ENCODE measurements at regions of chr4 and their contacts with region 1.

Region 1: DNA sequence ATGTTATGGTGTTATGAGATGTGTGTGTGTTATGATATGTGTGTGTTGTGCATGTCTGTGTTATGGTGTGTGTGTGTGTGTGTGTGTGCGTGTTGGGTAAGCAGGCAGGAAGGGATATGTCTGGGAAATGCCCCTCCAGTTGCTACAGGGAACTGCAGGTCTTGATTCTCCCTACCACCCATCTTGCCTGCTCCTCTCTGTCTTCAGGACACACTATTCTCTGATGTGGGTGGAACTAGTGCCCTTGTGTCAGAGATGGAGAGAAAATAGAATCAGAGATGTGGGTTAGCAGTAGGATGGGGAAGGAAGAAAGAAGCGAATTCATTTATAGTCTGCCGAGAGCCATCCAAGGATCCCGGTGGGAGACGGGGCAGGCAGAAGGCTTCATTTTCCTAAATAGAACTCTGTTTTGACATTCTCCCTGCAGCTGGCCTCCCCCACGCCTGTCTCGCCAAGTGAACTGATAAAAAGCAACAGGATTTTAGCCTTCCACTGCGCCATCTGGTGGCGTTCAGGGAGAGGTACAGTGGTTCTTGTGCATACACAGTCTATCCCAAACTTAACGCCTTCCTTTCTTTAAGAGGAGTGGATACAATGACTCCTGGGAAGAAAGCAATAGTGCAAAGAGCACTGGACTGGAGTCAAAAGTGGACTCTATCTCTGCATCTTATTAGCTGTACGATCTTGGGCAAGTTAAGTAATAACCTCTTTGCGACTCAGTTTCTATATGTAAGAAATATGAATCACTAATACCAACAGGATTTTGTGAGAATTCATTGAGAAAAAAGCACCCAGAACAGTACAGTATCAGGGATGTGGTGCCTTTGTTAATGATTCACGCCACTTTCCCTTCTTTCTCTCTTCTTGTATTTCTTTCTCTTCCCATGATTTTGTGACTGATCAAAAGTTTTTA is 14.1 kb upstream of the MGST2 start:
- DNase-seq: peak; percentile 85
- H3K4me3 ChIP-seq: no peak overlapping the region
- H3K27ac ChIP-seq: no peak overlapping the region
- H3K4me1 ChIP-seq: no peaks in the 10 kb centered on the region
- H3K27me3 ChIP-seq: no peaks in the 10 kb centered on the region
- CTCF ChIP-seq: peak; percentile 92

Region 2: GRCh38 chr4:139030614-139031235 is 620.8 kb before region 1 on chr4:
- CTCF ChIA-PET with region 1: interaction called, 6 read pairs
- POLR2A ChIA-PET with region 1: no interaction called
- intact Hi-C with region 1: loop called (anchors 10 kb)
- DNase-seq: peak; percentile 86
- H3K4me3 ChIP-seq: no peak overlapping the region
- H3K27ac ChIP-seq: no peak overlapping the region
- H3K4me1 ChIP-seq: peaks cover 3% of the 10 kb centered on the region
- H3K27me3 ChIP-seq: no peaks in the 10 kb centered on the region
- CTCF ChIP-seq: peak; percentile 91

Region 3: GRCh38 chr4:139108567-139109128 is 542.9 kb before region 1 on chr4:
- CTCF ChIA-PET with region 1: no interaction called
- POLR2A ChIA-PET with region 1: no interaction called
- intact Hi-C with region 1: loop called (anchors 10 kb)
- DNase-seq: no peak
- H3K4me3 ChIP-seq: no peak overlapping the region
- H3K27ac ChIP-seq: no peak overlapping the region
- H3K4me1 ChIP-seq: no peaks in the 10 kb centered on the region
- H3K27me3 ChIP-seq: no peaks in the 10 kb centered on the region
- CTCF ChIP-seq: no peak

Region 4: GRCh38 chr4:139416073-139416673 is 235.4 kb before region 1 on chr4:
- CTCF ChIA-PET with region 1: no interaction called
- POLR2A ChIA-PET with region 1: no interaction called
- intact Hi-C with region 1: loop called (anchors 10 kb)
- DNase-seq: peak; percentile 60
- H3K4me3 ChIP-seq: no peak overlapping the region
- H3K27ac ChIP-seq: no peak overlapping the region
- H3K4me1 ChIP-seq: peaks cover 13% of the 10 kb centered on the region
- H3K27me3 ChIP-seq: no peaks in the 10 kb centered on the region
- CTCF ChIP-seq: peak; percentile 75

Region 5: DNA sequence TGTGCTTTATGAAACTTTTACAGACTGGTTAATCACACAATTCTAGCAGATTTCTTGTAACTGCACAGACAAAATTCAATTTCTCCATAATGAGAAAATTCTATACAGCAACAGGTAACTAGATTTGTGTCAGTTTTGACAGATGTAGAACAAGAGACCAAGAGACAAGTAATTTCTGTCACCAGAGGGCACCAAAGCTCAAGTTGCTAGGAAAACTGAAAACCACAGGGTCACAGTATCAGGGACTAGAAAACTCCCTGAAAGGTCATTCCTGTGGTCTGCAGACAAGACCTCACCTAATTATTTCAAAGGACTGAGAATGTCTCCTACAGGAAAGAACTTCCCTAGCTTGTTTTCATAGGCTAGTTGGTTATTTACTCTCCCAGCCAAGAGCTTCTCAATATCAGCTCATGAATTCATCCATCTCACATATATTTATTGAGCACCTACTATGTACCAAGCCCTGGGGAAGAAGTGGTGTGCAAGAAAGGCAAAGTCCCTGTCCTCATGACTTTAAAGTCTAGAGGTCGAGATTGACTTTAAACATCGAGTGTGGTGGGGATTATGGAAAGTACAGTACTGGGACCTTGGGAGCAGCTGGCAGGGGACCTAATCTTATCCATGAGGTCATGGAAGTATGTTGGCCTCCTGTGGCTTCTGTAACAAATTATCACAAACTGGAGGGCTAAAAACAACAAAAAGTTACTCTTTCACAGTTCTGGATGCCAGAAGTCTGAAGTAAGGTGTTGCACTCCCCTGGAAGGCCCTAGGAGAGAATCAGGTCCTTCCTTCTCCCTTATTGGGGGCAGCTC is 47.8 kb before region 1 on chr4:
- CTCF ChIA-PET with region 1: interaction called, 17 read pairs
- POLR2A ChIA-PET with region 1: no interaction called
- intact Hi-C with region 1: loop called (anchors 1 kb)
- DNase-seq: peak; percentile 80
- H3K4me3 ChIP-seq: no peak overlapping the region
- H3K27ac ChIP-seq: peak overlapping the region; percentile 63
- H3K4me1 ChIP-seq: peaks cover 56% of the 10 kb centered on the region
- H3K27me3 ChIP-seq: no peaks in the 10 kb centered on the region
- CTCF ChIP-seq: peak; percentile 84

Region 6: GRCh38 chr4:140609548-140610425 is 958.2 kb after region 1 on chr4:
- CTCF ChIA-PET with region 1: no interaction called
- POLR2A ChIA-PET with region 1: no interaction called
- intact Hi-C with region 1: loop called (anchors 10 kb)
- DNase-seq: peak; percentile 76
- H3K4me3 ChIP-seq: no peak overlapping the region
- H3K27ac ChIP-seq: no peak overlapping the region
- H3K4me1 ChIP-seq: peaks cover 4% of the 10 kb centered on the region
- H3K27me3 ChIP-seq: no peaks in the 10 kb centered on the region
- CTCF ChIP-seq: peak; percentile 56